ENCODE measurements at regions of chr3 and their contacts with region 1.

Region 1: DNA sequence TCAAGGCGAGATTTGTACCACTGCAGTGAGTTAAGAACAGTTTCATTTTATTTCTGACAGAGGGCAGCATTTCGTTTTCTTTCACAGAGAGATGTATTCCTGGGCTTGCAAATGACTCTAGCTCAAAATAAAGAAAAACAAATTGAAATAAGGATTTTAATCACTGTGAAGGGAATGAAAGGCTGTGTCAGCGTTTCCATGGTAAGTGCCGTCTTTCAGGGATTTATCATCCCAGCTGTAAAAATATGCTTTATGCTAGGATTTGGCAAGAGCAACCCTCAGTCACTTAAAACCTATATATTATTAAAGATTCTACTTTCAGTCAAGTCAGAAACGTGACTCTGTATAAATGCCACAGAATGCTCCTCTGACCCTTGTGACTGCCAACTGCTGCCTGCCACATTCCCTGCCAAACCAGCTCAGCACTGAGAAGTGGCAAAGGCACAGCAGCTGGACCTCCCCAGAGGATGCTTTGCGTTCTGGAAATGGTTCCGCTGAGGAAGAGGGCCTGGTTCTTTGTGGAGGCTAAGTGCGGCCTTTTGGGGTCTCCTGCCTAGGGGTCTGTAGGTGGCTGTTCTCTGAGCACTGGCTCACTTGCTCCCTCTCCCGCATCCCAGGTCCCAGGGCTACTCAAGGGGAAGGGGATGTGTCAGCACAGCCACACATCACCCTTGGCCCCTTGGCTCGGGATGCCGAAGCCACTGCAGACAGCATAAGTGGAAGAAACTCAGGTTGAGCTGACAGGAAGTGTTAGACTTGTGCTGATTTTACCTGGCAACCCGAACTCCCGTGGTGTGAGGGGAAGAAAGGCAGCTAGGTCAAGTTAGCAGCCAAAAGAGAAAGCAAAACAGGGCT is 56.6 kb upstream of the POMGNT2 start:
- DNase-seq: peak; percentile 86
- H3K4me3 ChIP-seq: no peak overlapping the region
- H3K27ac ChIP-seq: peak overlapping the region; percentile 65
- H3K4me1 ChIP-seq: peaks cover 12% of the 10 kb centered on the region
- H3K27me3 ChIP-seq: no peaks in the 10 kb centered on the region
- CTCF ChIP-seq: peak; percentile 33 to 36
- POLR2A ChIP-seq: no peak

Region 2: GRCh38 chr3:42961633-42962032 is 200.8 kb before region 1 on chr3:
- CTCF ChIA-PET with region 1: interaction called, 115 read pairs
- POLR2A ChIA-PET with region 1: no interaction called
- dilution Hi-C with region 1: no loop called
- intact Hi-C with region 1: no loop called
- DNase-seq: peak; percentile 55
- H3K4me3 ChIP-seq: no peak overlapping the region
- H3K27ac ChIP-seq: no peak overlapping the region
- H3K4me1 ChIP-seq: no peaks in the 10 kb centered on the region
- H3K27me3 ChIP-seq: peaks cover 3 to 5% of the 10 kb centered on the region in 2 experiments
- CTCF ChIP-seq: peak; percentile 41 to 42
- POLR2A ChIP-seq: no peak

Region 3: DNA sequence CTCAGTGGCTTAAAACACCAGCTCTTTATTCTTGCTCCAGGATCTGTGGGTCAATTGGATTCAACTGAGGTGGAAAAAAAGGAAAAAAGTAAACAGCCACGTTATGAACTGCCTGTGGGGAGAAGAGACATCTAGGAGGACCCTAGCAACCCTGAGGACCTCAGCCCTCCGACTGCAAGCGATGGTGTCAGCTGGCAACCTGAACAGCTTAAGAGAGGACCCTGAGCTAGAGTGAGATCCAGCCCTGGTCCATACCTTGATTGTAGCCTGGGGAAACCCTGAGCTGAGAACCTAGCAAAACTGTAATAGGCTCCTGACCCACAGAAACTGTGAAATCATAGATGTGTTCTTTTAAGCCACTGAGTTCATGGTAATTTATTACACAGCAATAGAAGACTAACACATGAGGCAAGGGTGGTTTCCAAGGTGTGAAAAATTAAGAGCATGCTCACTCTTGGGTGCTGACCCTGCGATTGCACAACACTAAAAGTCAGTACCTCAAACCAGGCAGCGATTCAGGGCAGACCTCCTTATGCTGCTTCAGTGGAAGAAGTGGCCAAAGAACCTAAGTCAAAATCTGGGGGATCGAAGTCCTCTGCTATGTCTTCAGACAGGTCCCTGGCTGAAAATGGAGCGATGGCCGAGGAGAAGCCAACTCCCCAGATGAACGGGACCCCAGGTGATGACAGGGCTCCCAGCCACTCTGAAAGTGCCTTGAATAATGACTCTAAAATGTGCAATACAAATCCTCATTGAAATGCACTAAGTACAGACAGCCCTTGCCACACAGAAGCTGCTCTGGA is 125.6 kb before region 1 on chr3:
- CTCF ChIA-PET with region 1: no interaction called
- POLR2A ChIA-PET with region 1: no interaction called
- dilution Hi-C with region 1: no loop called
- intact Hi-C with region 1: no loop called
- DNase-seq: no peak
- H3K4me3 ChIP-seq: no peak overlapping the region
- H3K27ac ChIP-seq: no peak overlapping the region
- H3K4me1 ChIP-seq: no peaks in the 10 kb centered on the region
- H3K27me3 ChIP-seq: no peaks in the 10 kb centered on the region
- CTCF ChIP-seq: no peak
- POLR2A ChIP-seq: no peak

Region 4: GRCh38 chr3:43190666-43191065 is 28.2 kb after region 1 on chr3:
- CTCF ChIA-PET with region 1: interaction called, 15 read pairs
- POLR2A ChIA-PET with region 1: interaction called, 3 read pairs
- dilution Hi-C with region 1: no loop called
- intact Hi-C with region 1: loop called (anchors 1 kb)
- DNase-seq: peak; percentile 52
- H3K4me3 ChIP-seq: no peak overlapping the region
- H3K27ac ChIP-seq: peak overlapping the region; percentile 90
- H3K4me1 ChIP-seq: peaks cover 67% of the 10 kb centered on the region
- H3K27me3 ChIP-seq: no peaks in the 10 kb centered on the region
- CTCF ChIP-seq: no peak
- POLR2A ChIP-seq: no peak

Region 5: GRCh38 chr3:43246976-43247375 is 84.5 kb after region 1 on chr3:
- CTCF ChIA-PET with region 1: interaction called, 9 read pairs
- POLR2A ChIA-PET with region 1: no interaction called
- dilution Hi-C with region 1: no loop called
- intact Hi-C with region 1: loop called (anchors 1 kb)
- DNase-seq: peak; percentile 97
- H3K4me3 ChIP-seq: no peak overlapping the region
- H3K27ac ChIP-seq: peak overlapping the region; percentile 99
- H3K4me1 ChIP-seq: peaks cover 47% of the 10 kb centered on the region
- H3K27me3 ChIP-seq: no peaks in the 10 kb centered on the region
- CTCF ChIP-seq: no peak
- POLR2A ChIP-seq: peak; percentile 55

Region 6: DNA sequence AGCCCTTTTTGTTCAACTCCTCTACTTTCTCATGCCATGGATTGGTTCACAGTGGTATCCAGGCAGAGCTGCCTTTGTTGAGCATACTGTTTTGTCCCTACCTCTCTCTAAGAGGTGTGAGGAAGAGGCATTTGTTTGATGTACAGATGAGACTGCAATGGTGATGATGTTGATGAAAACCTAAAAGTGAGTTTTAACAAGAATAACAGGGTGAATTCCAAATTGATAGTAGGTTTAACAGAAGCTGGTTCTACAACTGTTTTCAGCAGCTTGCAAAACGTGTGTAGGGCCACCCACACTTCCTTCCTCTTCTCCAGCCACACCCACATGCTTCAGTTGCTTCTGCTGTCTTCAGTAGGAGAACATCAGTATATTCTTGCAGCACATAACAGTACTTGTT is 134.1 kb after region 1 on chr3:
- CTCF ChIA-PET with region 1: interaction called, 12 read pairs
- POLR2A ChIA-PET with region 1: no interaction called
- dilution Hi-C with region 1: no loop called
- intact Hi-C with region 1: loop called (anchors 1 kb)
- DNase-seq: peak; percentile 24
- H3K4me3 ChIP-seq: no peak overlapping the region
- H3K27ac ChIP-seq: no peak overlapping the region
- H3K4me1 ChIP-seq: peaks cover 59% of the 10 kb centered on the region
- H3K27me3 ChIP-seq: no peaks in the 10 kb centered on the region
- CTCF ChIP-seq: no peak
- POLR2A ChIP-seq: no peak

Region 7: GRCh38 chr3:43363621-43364266 is 201.3 kb after region 1 on chr3:
- CTCF ChIA-PET with region 1: no interaction called
- POLR2A ChIA-PET with region 1: no interaction called
- dilution Hi-C with region 1: no loop called
- intact Hi-C with region 1: loop called (anchors 5 kb)
- DNase-seq: no peak
- H3K4me3 ChIP-seq: no peak overlapping the region
- H3K27ac ChIP-seq: no peak overlapping the region
- H3K4me1 ChIP-seq: no peaks in the 10 kb centered on the region
- H3K27me3 ChIP-seq: no peaks in the 10 kb centered on the region
- CTCF ChIP-seq: no peak
- POLR2A ChIP-seq: no peak

Measured in endothelial cell of umbilical vein (primary cell).